Activated naive CD4-positive, alpha-beta T cell treated with anti-CD3 and anti-CD28 coated beads for 36 hours (primary cell): ENCODE measurements at regions of chr3 and their contacts with region 1.

Region 1: GRCh38 chr3:141231101-141231935 is at the start of gene PXYLP1:
- DNase-seq: peak; percentile 92
- H3K4me3 Mint-ChIP-seq: peak within 1 kb of the TSS; percentile 97
- H3K27ac Mint-ChIP-seq: peak within 1 kb of the TSS; percentile 95
- H3K4me1 Mint-ChIP-seq: peaks cover 34% of the 10 kb centered on the region
- H3K27me3 Mint-ChIP-seq: no peaks in the 10 kb centered on the region
- total RNA-seq, gene PXYLP1: 8.4 to 9.7 TPM

Region 2: DNA sequence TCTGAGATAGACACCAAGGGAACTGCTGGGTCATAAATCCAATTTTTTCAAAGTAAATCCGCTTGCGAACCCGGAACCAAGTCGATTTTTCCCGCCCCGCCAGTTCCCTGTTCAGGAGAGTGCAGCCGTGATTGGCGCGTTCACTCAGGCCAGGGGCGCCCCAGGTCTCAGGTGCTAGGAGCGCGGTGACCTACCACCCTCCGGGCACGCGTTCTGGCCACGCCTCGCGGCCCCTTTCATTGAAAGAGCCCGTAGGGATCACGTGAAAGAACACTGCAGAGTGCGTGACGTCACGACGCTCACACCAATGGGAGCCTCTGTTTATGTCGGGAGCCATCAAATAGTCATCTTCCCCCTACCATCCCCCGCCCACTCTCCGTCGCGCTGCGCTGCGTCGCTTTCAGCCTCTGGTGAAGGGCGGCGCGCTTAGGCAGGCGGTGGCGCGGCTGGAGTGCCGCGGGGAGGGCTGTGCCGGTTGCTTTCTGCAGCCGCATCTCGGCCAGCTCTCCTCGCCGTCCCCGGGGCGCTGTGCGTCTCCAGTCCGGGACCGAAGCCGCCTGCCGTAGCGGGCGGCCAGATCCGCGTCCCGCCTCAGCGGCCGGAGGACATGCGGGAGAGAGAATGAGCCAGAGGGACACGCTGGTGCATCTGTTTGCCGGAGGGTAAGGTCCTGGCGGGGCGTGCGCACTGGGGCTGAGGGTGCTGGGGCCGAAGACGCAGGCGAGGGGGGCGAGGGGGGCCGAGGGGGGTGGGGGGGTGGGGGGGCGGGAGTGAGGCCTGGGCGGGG is 289.7 kb before region 1 on chr3 and contains the start of gene SLC25A36:
- CTCF ChIA-PET with region 1: interaction called, 3 read pairs
- intact Hi-C with region 1: loop called (anchors 1 kb)
- DNase-seq: peak; percentile 99
- H3K4me3 Mint-ChIP-seq: peak within 1 kb of the TSS; percentile 89
- H3K27ac Mint-ChIP-seq: peak within 1 kb of the TSS; percentile 88
- H3K4me1 Mint-ChIP-seq: peaks cover 35% of the 10 kb centered on the region
- H3K27me3 Mint-ChIP-seq: no peaks in the 10 kb centered on the region
- total RNA-seq, gene SLC25A36: 48.7 to 50.1 TPM

Region 3: DNA sequence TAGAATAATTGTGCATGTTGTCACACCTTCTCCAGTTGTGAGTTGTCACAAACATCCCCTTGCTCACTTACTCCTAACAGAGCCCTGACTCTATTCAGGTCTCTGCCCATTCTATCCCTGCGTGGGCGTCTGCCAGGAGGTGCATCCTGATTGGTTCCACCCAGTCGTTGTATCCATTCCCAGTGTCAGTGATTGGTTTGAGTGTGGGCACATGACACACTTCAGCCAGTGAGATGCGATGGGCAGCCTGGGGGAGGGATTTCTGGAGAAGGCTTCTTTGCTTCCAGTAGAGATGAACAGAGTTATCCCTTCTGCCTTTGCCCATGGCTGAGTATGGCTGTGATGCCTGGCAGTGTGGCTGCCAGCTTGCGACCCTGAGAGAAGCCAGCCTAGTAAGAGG is 19.0 kb after region 1 on chr3:
- CTCF ChIA-PET with region 1: interaction called, 62 read pairs
- intact Hi-C with region 1: no loop called
- DNase-seq: no peak
- H3K4me3 Mint-ChIP-seq: no peak overlapping the region
- H3K27ac Mint-ChIP-seq: no peak overlapping the region
- H3K4me1 Mint-ChIP-seq: peaks cover 6% of the 10 kb centered on the region
- H3K27me3 Mint-ChIP-seq: no peaks in the 10 kb centered on the region

Region 4: GRCh38 chr3:141266797-141267555 is 35.7 kb after region 1 on chr3:
- CTCF ChIA-PET with region 1: interaction called, 25 read pairs
- intact Hi-C with region 1: no loop called
- DNase-seq: peak; percentile 52
- H3K4me3 Mint-ChIP-seq: peak overlapping the region; percentile 78
- H3K27ac Mint-ChIP-seq: peak overlapping the region; percentile 86
- H3K4me1 Mint-ChIP-seq: peaks cover 35% of the 10 kb centered on the region
- H3K27me3 Mint-ChIP-seq: no peaks in the 10 kb centered on the region

Region 5: DNA sequence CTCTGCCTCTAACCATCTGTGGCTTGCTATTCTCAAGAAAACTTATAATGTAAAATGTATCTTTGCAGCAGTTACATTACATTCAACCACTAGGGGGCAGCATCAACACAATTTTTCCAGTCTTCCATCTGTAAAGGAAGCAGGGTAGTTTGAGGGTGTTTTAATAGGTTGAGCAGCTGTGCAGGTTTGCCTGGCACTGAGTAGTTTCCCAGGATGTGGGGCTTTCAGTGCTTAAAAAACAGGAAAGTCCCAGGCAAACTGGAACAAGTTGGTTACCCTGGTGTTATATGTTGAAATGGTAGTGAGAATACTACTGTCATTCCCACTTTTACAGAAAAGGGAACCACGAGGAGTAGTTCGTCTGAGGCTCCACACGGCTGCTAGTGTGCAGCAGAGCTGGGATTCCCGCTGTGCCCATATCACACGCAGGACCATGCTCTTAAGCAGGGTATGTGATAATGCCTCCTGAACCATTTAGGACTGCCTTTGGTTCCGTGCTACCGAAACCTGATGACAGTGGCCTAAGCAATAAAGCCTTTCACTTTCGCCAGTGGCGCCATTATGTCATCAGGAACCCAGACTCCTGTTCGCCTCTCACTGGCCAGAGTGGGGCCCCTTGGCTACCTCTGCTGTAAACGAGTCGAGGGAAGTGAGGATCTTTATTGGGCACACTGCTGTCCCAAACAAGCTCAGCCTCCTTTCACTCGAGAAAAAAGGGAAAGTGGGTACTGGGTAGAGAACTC is 72.3 kb after region 1 on chr3:
- CTCF ChIA-PET with region 1: interaction called, 23 read pairs
- intact Hi-C with region 1: loop called (anchors 1 kb)
- DNase-seq: peak; percentile 85
- H3K4me3 Mint-ChIP-seq: no peak overlapping the region
- H3K27ac Mint-ChIP-seq: no peak overlapping the region
- H3K4me1 Mint-ChIP-seq: peaks cover 55% of the 10 kb centered on the region
- H3K27me3 Mint-ChIP-seq: no peaks in the 10 kb centered on the region

Region 6: DNA sequence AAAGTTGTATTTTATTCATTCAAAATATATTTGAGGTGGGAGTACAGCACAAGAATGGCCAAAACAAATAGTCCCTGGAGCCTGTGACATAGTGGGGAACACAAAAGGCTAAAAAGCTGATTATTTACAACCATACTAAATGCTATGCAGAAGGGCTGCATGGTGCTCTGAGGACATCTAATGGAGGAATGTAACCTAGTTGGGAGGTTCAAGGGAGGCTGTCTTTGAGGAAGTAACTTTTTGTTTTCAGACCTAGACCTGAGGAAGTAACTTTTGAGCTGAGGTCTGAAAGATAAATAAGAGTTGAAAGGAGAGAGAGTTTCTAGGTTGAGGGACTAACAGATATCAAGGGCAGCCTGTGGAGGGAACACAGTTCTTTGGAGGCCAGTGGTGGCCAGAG is 220.7 kb after region 1 on chr3:
- CTCF ChIA-PET with region 1: interaction called, 7 read pairs
- intact Hi-C with region 1: loop called (anchors 2 kb)
- DNase-seq: peak; percentile 75
- H3K4me3 Mint-ChIP-seq: no peak overlapping the region
- H3K27ac Mint-ChIP-seq: no peak overlapping the region
- H3K4me1 Mint-ChIP-seq: peaks cover 20% of the 10 kb centered on the region
- H3K27me3 Mint-ChIP-seq: no peaks in the 10 kb centered on the region

Region 7: GRCh38 chr3:142578327-142579223 is 1347.3 kb after region 1 on chr3 and contains the start of gene ATR:
- CTCF ChIA-PET with region 1: no interaction called
- intact Hi-C with region 1: loop called (anchors 10 kb)
- DNase-seq: peak; percentile 98
- H3K4me3 Mint-ChIP-seq: peak within 1 kb of the TSS; percentile 94
- H3K27ac Mint-ChIP-seq: peak within 1 kb of the TSS; percentile 95
- H3K4me1 Mint-ChIP-seq: peaks cover 41% of the 10 kb centered on the region
- H3K27me3 Mint-ChIP-seq: no peaks in the 10 kb centered on the region
- total RNA-seq, gene ATR: 42.5 to 43.1 TPM